A673 (cell line): ENCODE measurements at regions of chr1 and their contacts with region 1.

Region 1: GRCh38 chr1:161287482-161288054 is 22.2 kb downstream of the MPZ start:
- DNase-seq: no peak
- H3K4me3 ChIP-seq: no peak overlapping the region
- H3K27ac ChIP-seq: no peak overlapping the region
- H3K4me1 ChIP-seq: no peaks in the 10 kb centered on the region
- H3K27me3 ChIP-seq: peaks cover 12% of the 10 kb centered on the region
- CTCF ChIP-seq: no peak

Region 2: DNA sequence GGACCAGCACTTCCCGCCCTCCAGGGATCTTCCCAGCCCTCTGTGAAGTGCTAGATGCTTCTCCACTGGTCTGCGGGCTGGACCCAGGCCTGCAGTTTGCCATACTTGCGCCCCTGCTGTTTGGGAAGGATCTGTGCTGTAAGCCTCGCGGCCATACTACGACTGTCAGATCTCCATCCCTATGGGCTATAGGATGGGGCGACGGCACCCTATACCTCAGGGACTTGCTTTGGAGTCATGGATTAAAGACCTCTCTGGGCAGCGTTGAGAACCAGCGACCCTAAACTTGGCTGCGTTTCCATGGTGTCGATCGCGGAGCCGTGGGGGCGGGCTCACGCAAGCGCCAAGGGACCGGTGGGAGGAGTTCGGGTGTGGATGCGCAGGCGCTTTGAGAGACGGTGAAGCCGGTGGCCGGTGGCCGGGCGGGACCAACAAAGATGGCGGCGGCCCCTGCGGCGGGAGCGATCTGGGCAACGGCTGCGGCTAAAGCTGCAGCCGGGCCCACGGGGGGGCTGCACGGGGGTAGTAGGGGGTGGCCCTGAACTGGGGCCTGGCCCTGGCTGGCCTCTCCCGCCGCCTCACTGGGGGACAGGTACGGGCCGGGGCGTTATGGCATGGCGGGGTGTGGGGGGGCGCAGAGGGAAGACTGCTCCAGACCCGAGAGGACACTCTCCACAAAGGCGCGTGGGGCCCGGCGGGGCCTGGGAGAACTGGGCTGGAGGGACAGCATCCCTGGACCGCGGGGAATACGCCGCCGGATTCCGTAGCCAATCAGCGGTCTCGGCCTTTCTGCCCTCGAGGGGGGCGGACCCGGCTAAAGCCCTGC is 128.3 kb before region 1 on chr1 and contains the start of gene USP21:
- CTCF ChIA-PET with region 1: no interaction called
- POLR2A ChIA-PET with region 1: no interaction called
- intact Hi-C with region 1: no loop called
- DNase-seq: peak; percentile 96
- H3K4me3 ChIP-seq: peak within 1 kb of the TSS; percentile 82
- H3K27ac ChIP-seq: peak within 1 kb of the TSS; percentile 92
- H3K4me1 ChIP-seq: peaks cover 5% of the 10 kb centered on the region
- H3K27me3 ChIP-seq: no peaks in the 10 kb centered on the region
- CTCF ChIP-seq: no peak
- total RNA-seq, gene USP21: 46.2 and 51.8 TPM in 2 replicates

Region 3: DNA sequence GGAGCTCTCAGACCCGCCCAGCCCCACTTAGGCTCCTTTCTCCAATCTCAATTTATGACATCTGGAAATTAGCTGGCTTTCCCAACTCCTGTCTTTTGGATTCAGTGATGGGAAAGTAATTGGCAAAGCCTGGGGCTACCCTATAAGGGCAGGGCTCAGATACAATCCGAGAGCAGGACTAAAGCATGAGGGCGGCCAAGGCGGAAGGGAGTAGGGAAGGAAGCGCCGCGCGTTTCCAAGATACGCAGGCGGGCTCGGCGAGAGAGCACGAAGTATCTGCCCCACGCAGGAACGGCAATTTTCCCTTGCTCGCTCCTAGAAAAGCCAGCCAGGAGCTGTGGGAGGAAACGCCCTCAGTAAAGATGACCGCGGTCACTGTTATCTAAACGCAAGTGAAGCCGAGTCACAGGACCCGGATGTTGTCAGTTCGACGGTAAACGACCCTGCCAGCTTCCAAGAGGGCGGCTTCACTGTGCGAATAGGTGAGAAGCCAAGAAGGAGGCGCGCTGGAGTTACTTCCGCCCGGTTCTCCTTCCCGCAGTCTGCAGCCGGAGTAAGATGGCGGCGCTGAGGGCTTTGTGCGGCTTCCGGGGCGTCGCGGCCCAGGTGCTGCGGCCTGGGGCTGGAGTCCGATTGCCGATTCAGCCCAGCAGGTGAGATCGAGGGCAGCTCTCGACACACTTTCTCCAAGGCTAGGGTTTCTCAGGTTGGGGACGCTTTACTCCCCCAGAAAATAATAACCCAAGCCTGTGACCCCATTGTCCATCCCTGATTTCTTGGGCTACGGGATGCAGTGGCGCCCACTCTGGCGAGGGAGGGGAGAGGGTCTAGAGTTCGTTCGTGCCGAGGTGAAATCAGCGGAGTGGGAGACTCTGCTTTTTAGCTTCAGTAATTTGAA is 85.5 kb before region 1 on chr1 and contains the start of gene NDUFS2:
- CTCF ChIA-PET with region 1: interaction called, 10 read pairs
- POLR2A ChIA-PET with region 1: no interaction called
- intact Hi-C with region 1: no loop called
- DNase-seq: peak; percentile 100
- H3K4me3 ChIP-seq: peak within 1 kb of the TSS; percentile 92
- H3K27ac ChIP-seq: peak within 1 kb of the TSS; percentile 87
- H3K4me1 ChIP-seq: peaks cover 39% of the 10 kb centered on the region
- H3K27me3 ChIP-seq: no peaks in the 10 kb centered on the region
- CTCF ChIP-seq: peak; percentile 48
- total RNA-seq, gene NDUFS2: 123 and 133 TPM in 2 replicates

Region 4: DNA sequence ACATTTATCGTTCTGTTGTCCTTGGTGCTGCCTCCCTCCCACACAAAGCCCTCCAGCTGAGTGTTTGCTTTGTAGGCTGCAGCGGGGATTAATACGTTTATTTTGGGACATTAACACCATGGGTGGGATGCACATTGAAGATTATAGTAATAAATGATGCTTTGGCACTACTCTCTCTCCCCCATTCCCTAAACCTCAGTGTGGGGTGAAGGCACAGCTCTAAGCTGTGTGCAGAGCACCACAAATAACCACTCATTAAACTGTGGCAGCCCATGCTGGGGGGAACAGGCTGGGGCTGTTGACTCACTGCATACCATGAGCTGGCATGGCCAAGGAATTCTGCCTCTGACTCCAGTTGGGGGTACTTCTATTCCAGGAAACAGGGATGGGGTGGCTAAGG is 21.4 kb before region 1 on chr1:
- CTCF ChIA-PET with region 1: no interaction called
- POLR2A ChIA-PET with region 1: no interaction called
- intact Hi-C with region 1: no loop called
- DNase-seq: peak; percentile 24
- H3K4me3 ChIP-seq: no peak overlapping the region
- H3K27ac ChIP-seq: no peak overlapping the region
- H3K4me1 ChIP-seq: no peaks in the 10 kb centered on the region
- H3K27me3 ChIP-seq: no peaks in the 10 kb centered on the region
- CTCF ChIP-seq: no peak

Region 5: GRCh38 chr1:161427733-161428516 is 140.4 kb after region 1 on chr1:
- CTCF ChIA-PET with region 1: no interaction called
- POLR2A ChIA-PET with region 1: no interaction called
- intact Hi-C with region 1: no loop called
- DNase-seq: peak; percentile 73
- H3K4me3 ChIP-seq: peak overlapping the region; percentile 42
- H3K27ac ChIP-seq: no peak overlapping the region
- H3K4me1 ChIP-seq: no peaks in the 10 kb centered on the region
- H3K27me3 ChIP-seq: no peaks in the 10 kb centered on the region
- CTCF ChIP-seq: no peak

Region 6: DNA sequence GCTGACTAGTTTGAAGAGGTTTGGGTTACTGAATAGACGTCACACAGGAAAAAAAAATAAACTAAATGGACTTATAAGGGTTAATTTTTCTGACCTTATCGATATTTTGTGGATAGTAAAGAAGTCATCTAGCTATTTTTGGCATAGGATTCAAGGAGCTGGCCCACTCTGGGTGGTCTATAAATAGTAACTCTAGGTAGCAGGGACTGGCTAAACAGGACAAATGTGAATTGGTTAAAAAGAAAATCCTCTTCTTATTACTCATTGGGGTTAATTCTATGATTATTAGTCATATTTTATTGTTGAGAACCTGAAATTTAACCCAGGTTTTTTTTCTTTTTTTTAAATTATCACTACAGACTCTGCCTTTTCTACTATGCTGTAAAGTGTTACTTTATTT is 540.2 kb after region 1 on chr1:
- CTCF ChIA-PET with region 1: interaction called, 10 read pairs
- POLR2A ChIA-PET with region 1: no interaction called
- intact Hi-C with region 1: no loop called
- DNase-seq: no peak
- H3K4me3 ChIP-seq: no peak overlapping the region
- H3K27ac ChIP-seq: no peak overlapping the region
- H3K4me1 ChIP-seq: peaks cover 32% of the 10 kb centered on the region
- H3K27me3 ChIP-seq: no peaks in the 10 kb centered on the region
- CTCF ChIP-seq: no peak